ENCODE measurements at regions of chr19 and their contacts with region 1.

Region 1: DNA sequence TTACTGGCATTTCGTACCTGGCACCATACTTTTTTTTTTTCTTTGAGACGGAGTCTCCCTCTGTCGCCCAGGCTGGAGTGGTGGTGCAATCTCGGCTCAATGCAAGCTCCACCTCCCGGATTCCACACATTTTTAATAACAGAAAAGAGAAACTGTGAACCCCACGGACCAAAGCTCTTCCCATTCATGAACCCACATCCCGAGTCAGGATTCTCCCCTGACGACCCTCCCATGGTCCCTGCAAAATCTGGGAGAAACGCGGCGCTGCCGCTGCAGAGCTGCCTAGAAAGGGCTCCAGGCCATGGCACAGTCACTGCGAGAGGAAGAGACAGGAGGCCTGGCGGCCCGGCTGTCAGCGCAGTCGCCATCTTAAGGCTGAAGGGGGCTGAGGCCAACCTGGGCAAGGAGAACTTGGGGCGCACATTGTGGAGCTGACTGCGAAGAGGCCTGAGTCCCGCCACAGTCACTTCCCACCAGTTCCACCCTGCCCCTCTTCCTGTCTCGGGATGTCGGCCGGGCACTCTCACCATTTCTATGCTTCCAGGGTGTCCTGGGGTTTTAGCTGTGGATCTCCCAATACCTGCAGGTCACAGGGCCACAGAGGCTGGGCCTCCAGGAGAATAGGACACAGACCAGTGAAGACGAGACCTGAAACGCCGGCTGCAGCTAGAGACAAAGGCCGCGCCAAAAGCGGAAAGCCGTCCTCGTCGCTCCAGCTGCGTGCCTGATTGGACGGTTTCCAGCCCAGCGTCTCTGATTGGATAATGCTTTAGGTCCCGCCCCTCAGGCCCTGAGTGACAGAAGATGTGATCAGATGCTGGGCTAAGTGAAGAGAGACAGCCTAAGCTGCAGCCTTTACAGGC is 71.0 kb downstream of the ZNF486 start:
- DNase-seq: peak; percentile 72
- H3K4me3 Mint-ChIP-seq: peak overlapping the region; percentile 95
- H3K27ac Mint-ChIP-seq: peak overlapping the region; percentile 91
- H3K4me1 Mint-ChIP-seq: peaks cover 9% of the 10 kb centered on the region
- H3K27me3 Mint-ChIP-seq: no peaks in the 10 kb centered on the region

Region 2: GRCh38 chr19:20039203-20039723 is 198.7 kb before region 1 on chr19 and contains the start of gene ZNF682:
- intact Hi-C with region 1: loop called (anchors 1 kb)
- DNase-seq: peak; percentile 82
- H3K4me3 Mint-ChIP-seq: peak within 1 kb of the TSS; percentile 91
- H3K27ac Mint-ChIP-seq: peak within 1 kb of the TSS; percentile 88
- H3K4me1 Mint-ChIP-seq: peaks cover 17% of the 10 kb centered on the region
- H3K27me3 Mint-ChIP-seq: no peaks in the 10 kb centered on the region
- total RNA-seq, gene ZNF682: 6.1 and 6.2 TPM in 2 replicates

Region 3: GRCh38 chr19:20167020-20167644 is 70.9 kb before region 1 on chr19 and contains the start of gene ZNF486:
- intact Hi-C with region 1: loop called (anchors 2 kb)
- DNase-seq: peak; percentile 81
- H3K4me3 Mint-ChIP-seq: peak within 1 kb of the TSS; percentile 95
- H3K27ac Mint-ChIP-seq: peak within 1 kb of the TSS; percentile 87
- H3K4me1 Mint-ChIP-seq: peaks cover 8% of the 10 kb centered on the region
- H3K27me3 Mint-ChIP-seq: no peaks in the 10 kb centered on the region
- total RNA-seq, gene ZNF486: 4.0 TPM in 2 replicates

Region 4: GRCh38 chr19:20423381-20424197 is 185.6 kb after region 1 on chr19:
- intact Hi-C with region 1: loop called (anchors 2 kb)
- DNase-seq: peak; percentile 4
- H3K4me3 Mint-ChIP-seq: peak overlapping the region; percentile 94
- H3K27ac Mint-ChIP-seq: peak overlapping the region; percentile 97
- H3K4me1 Mint-ChIP-seq: no peaks in the 10 kb centered on the region
- H3K27me3 Mint-ChIP-seq: no peaks in the 10 kb centered on the region

Measured in activated T-helper 1 cell treated with anti-CD3 and anti-CD28 coated beads, Interleukin-12 subunit alpha, Interleukin-12 subunit beta, Interleukin-2, Interleukin-4 antibody, amounts not matched to agents 30 ng/mL and 10 ng/mL and 1 ng/mL, durations not matched to agents 14 hours and 24 hours and 36 hours (primary cell).